ENCODE measurements at regions of chr3 and their contacts with region 1.

Region 1: DNA sequence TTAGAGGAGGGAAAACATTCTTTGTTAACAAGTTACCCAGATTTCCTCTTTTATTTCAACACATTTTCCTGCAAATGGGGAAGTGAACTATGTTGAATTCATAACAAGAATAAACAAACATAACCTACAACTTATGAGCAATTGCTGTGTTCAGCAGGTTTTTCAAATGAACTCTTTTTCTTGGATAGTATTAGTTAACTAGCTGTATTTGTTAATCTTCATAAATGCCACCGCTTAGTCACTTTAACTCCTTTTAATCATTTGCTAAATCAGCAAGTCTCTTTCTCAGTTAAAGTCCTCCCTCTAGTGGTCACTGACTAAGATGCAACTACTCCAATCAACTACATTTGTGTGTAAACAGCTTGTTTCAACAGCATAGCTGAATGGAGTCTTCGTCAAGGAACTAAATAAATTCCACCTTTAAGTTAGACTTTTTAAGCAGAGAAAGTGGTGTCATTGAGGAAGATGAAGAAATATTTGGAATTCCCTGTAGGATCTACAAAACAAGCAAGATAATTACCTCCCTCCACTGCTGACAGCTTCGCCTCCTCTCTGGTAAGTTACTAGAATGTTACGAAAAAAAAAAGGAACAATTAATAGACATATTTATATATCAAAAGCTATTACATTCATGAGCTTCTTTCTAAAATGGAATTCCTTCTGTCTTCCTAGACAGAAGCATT is 1122.0 kb downstream of the ROBO1 start:
- DNase-seq: no peak
- ATAC-seq: peak; percentile 38 to 56

Region 2: GRCh38 chr3:77038468-77038929 is 1607.3 kb before region 1 on chr3:
- intact Hi-C with region 1: loop called in 1 of 2 experiments (anchors 2 kb)
- DNase-seq: peak; percentile 69
- ATAC-seq: peak; percentile 94

Region 3: GRCh38 chr3:78569804-78570203 is 76.0 kb before region 1 on chr3:
- intact Hi-C with region 1: no loop called
- DNase-seq: no peak
- ATAC-seq: no peak

Region 4: DNA sequence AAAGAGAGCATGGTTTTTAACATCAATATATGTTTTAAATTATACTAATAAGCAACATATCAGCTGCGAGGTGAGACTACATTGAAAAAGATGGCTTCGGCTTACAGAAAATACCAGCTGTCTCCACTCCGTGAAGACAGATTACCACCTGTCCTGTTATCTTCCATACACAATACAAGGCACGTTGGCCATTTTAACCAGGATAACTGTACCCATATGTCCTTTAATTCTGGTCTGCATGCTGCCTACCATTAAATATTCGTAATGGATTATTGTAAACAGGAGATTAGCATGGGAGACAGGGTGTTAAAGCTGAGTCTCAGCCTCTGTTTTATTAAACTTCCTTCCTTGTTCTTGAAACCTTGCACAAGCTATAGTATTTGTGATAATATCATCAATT is 266.5 kb after region 1 on chr3:
- intact Hi-C with region 1: no loop called
- DNase-seq: no peak
- ATAC-seq: no peak

Region 5: DNA sequence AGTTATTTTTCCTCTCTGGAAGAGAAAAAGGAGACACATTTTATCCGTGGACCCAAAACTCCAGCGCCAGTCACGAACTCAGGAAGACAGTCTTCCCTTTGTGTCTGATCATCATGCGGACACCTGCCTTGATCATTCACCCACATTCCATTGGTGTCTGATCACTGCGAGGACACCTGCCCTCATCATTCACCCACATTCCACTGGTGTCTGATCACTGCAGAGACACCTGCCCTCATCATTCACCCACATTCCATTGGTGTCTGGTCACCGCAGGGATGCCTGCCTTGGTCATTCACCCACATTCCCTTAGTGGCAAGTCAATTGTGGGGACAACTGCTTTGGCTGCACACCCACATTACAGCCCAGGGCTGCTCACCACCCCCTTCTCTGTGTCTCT is 973.1 kb after region 1 on chr3:
- intact Hi-C with region 1: no loop called
- DNase-seq: no peak
- ATAC-seq: no peak